Aorta (tissue), 5 donors: ENCODE measurements at regions of chr3 and their contacts with region 1.

Region 1: DNA sequence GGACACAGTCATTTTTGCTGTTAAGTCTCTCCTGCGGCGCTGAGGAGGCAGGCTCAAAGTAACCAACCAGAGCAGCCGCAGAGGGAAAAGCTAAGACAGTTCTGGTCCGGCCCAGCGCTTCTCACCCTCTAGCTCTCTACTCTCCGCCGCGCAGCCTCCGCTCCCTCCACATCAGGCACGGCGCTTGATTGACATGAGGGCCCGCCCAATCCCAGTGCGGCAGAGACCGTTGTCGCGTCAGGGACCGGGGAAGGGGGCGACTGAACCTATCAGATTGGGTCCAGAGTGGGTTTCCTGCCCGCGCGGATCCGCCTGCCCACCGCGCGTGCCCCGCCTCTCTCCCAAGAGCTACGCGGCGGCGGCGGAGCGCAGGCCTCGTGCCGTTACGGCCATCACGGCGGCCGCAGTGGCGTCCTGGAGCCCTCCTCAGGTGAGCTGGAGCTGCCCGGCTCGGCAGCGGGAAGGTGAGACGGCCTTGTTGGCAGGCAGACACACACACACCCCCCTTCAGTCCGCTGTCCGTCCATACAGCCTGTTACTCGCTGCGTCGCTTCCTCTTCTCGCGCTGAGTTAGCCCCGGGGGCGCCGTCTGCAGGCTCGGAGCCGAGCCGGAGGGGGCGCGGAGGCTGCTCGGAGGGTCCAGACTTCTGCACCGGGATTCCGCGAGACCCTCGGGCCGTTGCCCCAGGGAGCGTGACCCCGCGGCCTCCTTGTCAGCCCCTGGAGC is at the start of gene NCK1:
- DNase-seq: peak; percentile 99 to 100
- ATAC-seq: peak; percentile 99
- H3K4me3 ChIP-seq: peak within 1 kb of the TSS; percentile 67 to 69
- H3K27ac ChIP-seq: peak within 1 kb of the TSS in 1 of 2 donors; percentile 37
- H3K4me1 ChIP-seq: no peaks in the 10 kb centered on the region
- H3K27me3 ChIP-seq: no peaks in the 10 kb centered on the region
- total RNA-seq, gene NCK1: 36.7 to 51.9 TPM

Region 2: DNA sequence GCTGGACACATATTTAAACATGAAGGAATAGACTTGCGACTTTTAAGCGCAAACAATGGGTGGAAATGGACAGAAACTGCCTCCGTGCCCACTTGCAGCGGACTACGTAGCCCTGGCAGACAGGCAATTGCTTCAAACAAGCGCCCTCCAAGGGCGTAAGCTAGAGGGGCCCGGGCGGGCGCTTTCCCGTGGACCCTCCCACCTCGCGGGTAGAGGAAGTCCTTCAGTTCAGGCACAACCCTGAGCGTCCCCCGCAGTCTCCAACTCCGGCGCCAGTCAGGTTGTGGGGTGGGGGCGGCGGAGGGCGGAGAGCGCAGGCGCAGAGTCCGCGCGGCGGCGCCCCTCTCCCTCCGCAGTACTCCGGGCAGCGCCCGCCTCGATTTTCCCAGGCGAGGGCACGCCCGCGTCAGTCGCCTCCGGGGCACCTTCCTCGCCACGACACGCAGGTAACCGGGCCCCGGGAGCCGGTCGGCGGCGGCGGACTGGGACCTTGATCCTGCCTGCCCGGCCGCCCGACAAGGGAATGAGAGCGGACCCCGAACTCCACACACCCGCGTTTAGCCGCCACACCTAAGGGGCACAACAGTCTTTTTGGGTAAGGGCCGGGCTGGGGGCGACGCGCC is 43.2 kb before region 1 on chr3 and contains the start of gene SLC35G2:
- intact Hi-C with region 1: loop called in 1 of 2 experiments (anchors 5 kb)
- DNase-seq: peak; percentile 61 to 84
- ATAC-seq: peak; percentile 90
- H3K4me3 ChIP-seq: peak within 1 kb of the TSS; percentile 38 to 58
- H3K27ac ChIP-seq: no peak within 1 kb of the TSS
- H3K4me1 ChIP-seq: no peaks in the 10 kb centered on the region
- H3K27me3 ChIP-seq: no peaks in the 10 kb centered on the region
- total RNA-seq, gene SLC35G2: 7.5 to 13.1 TPM

Region 3: GRCh38 chr3:136909187-136909586 is 47.1 kb after region 1 on chr3:
- intact Hi-C with region 1: no loop called
- DNase-seq: no peak
- ATAC-seq: no peak
- H3K4me3 ChIP-seq: no peak overlapping the region
- H3K27ac ChIP-seq: no peak overlapping the region
- H3K4me1 ChIP-seq: no peaks in the 10 kb centered on the region
- H3K27me3 ChIP-seq: no peaks in the 10 kb centered on the region

Region 4: DNA sequence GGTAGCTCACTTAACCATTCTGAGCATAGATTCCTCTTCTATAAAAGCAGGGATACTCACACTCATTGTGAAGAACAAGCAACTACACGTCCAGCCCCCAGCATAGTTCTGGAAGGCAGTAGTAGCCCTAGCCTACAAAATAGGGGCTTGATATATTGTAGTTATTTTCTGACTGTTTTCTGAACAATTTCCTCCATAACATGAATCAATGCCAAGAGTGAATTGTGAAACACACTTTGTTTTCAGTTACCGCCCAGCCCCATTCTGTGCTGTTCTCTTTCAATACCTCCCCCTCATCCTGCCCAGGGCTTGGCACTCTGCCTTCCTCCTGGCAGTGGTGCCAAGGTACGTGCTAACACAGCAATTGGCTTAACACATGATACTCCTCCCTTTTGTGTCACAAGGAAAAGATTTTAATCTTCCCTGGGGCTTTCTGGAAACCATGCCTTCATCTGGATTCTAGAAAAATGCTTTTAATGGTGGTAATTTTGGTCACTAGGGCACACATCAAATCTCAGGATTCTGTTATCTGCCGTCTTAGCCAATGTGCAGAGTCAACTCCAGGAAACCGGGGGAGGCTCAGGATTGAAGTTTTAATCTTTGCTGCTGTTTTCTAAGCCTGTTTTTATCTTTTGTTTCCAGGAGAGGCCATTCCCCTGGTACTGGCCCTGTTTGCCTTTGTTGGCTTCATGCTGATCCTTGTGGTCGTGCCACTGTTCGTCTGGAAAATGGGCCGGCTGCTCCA is 132.9 kb after region 1 on chr3:
- intact Hi-C with region 1: loop called in 1 of 2 experiments (anchors 5 kb)
- DNase-seq: peak; percentile 92 to 93
- ATAC-seq: peak; percentile 93
- H3K4me3 ChIP-seq: no peak overlapping the region
- H3K27ac ChIP-seq: peak overlapping the region; percentile 90 to 95
- H3K4me1 ChIP-seq: peaks cover 0 to 3% of the 10 kb centered on the region in 2 donors
- H3K27me3 ChIP-seq: no peaks in the 10 kb centered on the region

Region 5: GRCh38 chr3:137304313-137305056 is 442.4 kb after region 1 on chr3:
- intact Hi-C with region 1: no loop called
- DNase-seq: no peak
- ATAC-seq: no peak
- H3K4me3 ChIP-seq: no peak overlapping the region
- H3K27ac ChIP-seq: no peak overlapping the region
- H3K4me1 ChIP-seq: no peaks in the 10 kb centered on the region
- H3K27me3 ChIP-seq: no peaks in the 10 kb centered on the region